IMR-90 (cell line): ENCODE measurements at regions of chr15 and their contacts with region 1.

Region 1: DNA sequence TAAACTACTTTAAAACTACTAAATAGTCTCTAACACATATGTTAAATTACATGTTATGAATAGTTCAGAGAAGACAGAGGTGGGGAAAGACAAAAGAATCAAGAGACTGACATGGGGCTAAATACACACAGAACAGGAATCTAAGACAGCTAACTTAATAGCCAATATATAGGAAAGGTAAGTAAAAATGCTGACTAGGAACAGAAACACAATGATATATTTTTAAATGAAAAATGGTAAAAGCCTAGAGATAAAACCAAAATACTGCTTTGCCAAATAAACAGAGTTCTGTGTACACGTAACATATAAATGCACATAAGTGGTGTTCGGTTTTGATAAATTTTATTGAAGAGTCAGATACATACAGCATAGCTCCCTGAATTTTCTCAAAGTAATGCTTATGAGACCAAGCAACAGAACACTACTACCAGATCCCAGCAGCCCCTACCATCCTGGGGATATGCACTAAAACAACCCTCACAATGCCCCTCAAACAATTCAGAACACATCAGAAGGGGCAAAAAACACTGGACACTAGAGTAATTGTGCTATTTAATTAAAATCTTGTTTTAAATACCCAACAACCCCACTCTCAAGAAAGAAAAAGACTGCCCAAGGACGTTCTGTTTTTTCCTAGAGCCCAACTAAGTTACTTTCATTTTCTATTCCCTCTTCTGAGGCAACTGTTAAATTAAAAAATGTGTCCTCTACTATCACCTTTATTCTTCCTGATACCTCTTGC is 121.1 kb downstream of the ADAM10 start:
- DNase-seq: no peak
- ATAC-seq: peak; percentile 63
- H3K4me3 ChIP-seq: peak overlapping the region; percentile 47; the same call in 1 of the 2 replicates
- H3K27ac ChIP-seq: peak overlapping the region; percentile 84
- H3K4me1 ChIP-seq: 0 out of 2 replicates have a peak, but pooled peaks cover 1% of the 10 kb centered on the region
- H3K27me3 ChIP-seq: no peaks in the 10 kb centered on the region
- CTCF ChIP-seq: no peak
- POLR2A ChIP-seq: no peak
- RAD21 ChIP-seq: no peak

Region 2: DNA sequence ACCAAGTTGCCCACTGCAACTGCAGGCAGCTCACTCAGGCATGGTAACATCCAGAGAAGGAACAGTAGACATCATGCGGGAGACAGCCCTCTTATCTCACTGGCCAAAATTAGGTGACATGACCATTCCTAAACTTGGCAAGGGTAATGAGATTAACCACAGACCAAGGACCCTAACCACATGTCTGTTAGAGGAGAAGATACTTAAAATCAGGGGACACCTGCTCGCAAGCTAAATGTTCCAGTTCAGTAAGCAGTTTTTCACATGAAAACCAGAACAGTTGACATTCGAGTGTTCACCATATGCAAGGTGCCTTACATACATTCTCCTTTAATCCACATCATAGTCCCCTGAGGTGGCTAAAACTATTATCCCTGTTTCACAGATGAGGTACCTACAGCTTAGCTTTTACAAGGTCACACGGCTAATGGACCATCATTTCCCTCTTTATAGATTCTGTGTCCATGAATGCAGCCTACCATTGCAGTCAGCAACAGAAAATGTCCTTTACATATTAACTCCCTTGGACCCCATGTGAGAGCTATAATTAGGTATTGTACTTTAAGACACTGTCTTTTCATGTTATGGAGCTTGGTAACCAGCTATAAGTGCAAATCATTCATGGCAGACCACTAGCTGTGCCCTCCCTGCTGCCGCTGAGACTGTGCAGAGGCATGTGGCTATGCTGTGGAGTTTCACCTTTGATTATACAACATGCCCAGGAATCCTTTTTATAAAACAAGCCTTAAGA is 42.5 kb before region 1 on chr15:
- CTCF ChIA-PET with region 1: no interaction called
- POLR2A ChIA-PET with region 1: no interaction called
- dilution Hi-C with region 1: no loop called
- in situ Hi-C with region 1: no loop called
- intact Hi-C with region 1: no loop called
- DNase-seq: no peak
- ATAC-seq: no peak
- H3K4me3 ChIP-seq: no peak overlapping the region
- H3K27ac ChIP-seq: no peak overlapping the region
- H3K4me1 ChIP-seq: peaks cover 5% of the 10 kb centered on the region; the same call in 1 of the 2 replicates
- H3K27me3 ChIP-seq: no peaks in the 10 kb centered on the region
- CTCF ChIP-seq: no peak
- POLR2A ChIP-seq: no peak
- RAD21 ChIP-seq: no peak

Region 3: DNA sequence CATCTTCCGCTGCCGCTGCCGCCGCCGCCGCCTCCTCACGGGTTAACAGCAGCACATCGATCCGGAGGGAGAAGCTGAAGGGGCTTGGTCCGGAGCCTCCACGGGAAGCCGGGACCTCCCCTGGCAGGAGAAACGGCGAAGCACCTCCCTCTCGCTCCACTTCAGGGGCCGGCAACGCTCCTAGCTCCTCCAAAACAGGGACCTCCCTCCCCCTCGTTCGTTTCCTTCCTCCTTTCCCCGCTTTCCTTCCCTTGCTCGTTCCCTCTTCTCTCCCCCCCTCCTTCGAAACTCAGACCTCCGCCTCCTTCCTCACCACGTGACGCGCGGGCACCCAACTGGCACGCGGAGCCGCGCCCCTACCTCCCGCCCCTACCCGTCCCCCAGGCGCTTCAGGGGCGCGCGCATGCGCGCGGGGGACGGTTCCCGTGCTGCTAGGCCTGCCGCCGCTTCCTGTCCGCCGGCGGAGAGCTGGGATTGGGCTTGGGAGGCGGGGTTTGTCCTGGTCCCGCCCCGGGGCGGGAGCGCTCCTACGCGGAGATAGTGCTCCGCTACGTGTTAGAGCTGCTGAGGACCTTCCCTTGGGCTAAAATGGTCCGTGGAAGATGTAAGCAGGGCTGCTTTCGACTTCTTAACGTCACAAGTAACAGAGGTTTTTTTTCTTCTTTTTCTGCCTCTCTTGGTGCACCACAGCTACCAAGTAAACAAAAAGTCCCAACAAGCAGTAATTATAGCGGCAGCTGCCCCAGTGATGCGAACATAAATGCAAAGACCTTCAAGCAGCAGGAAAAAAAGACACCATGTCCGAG is 121.4 kb after region 1 on chr15 and contains the start of gene ADAM10:
- CTCF ChIA-PET with region 1: no interaction called
- POLR2A ChIA-PET with region 1: interaction called, 3 read pairs
- dilution Hi-C with region 1: no loop called
- in situ Hi-C with region 1: no loop called
- intact Hi-C with region 1: loop called (anchors 5 kb)
- DNase-seq: peak; percentile 99
- ATAC-seq: peak; percentile 94
- H3K4me3 ChIP-seq: peak within 1 kb of the TSS; percentile 74
- H3K27ac ChIP-seq: peak within 1 kb of the TSS; percentile 93
- H3K4me1 ChIP-seq: no peaks in the 10 kb centered on the region
- H3K27me3 ChIP-seq: no peaks in the 10 kb centered on the region
- CTCF ChIP-seq: no peak
- POLR2A ChIP-seq: peak; percentile 86
- RAD21 ChIP-seq: no peak; the same call in 1 of the 2 replicates
- total RNA-seq, gene ADAM10: 185 and 217 TPM in 2 replicates

Region 4: DNA sequence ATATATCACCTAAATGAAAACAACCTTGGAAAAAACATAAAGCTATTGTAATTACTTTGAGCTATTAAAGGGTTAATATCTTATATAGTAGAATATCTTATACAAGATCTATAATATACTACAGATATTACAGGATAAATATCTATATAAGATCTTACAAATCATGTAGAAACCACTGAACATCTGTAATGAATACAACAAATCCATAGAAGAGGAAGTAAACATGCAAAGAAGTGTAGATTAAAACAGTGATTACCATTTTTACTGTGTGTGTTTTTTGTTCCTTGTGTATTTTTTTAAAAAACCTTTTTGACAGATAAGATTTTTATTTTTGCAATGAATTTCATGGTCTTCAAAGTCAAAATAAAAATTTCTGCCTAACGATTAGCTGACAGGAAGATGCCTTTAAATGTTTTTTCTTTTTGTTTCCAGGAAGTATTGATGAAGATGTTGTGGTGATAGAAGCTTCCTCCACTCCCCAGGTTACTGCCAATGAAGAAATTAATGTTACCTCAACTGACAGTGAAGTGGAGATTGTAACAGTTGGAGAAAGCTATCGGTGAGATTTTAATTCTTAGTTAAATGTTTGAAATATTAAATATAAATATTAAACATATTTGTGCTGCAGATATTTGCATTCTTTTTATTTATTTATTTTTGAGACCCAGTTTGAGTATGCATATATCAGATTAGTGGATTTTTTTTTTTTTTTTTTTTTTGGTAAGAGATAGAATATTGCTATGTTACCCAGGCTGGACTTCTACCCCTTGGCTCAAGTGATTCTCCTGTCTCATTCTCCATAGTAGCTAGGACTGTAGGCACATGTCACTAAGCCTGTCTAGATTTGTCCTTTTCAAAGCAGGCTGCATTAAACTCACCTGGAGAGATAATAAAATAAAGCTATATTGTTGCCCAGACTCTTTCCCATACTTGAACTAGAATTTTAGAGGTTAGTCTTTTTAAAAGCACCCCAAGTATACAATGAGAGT is 423.8 kb after region 1 on chr15:
- CTCF ChIA-PET with region 1: no interaction called
- POLR2A ChIA-PET with region 1: no interaction called
- dilution Hi-C with region 1: no loop called
- in situ Hi-C with region 1: no loop called
- intact Hi-C with region 1: no loop called
- DNase-seq: no peak
- ATAC-seq: no peak
- H3K4me3 ChIP-seq: no peak overlapping the region
- H3K27ac ChIP-seq: no peak overlapping the region
- H3K4me1 ChIP-seq: no peaks in the 10 kb centered on the region
- H3K27me3 ChIP-seq: no peaks in the 10 kb centered on the region
- CTCF ChIP-seq: no peak
- POLR2A ChIP-seq: no peak
- RAD21 ChIP-seq: no peak